Panc1 (cell line): ENCODE measurements at regions of chr1 and their contacts with region 1.

Region 1: DNA sequence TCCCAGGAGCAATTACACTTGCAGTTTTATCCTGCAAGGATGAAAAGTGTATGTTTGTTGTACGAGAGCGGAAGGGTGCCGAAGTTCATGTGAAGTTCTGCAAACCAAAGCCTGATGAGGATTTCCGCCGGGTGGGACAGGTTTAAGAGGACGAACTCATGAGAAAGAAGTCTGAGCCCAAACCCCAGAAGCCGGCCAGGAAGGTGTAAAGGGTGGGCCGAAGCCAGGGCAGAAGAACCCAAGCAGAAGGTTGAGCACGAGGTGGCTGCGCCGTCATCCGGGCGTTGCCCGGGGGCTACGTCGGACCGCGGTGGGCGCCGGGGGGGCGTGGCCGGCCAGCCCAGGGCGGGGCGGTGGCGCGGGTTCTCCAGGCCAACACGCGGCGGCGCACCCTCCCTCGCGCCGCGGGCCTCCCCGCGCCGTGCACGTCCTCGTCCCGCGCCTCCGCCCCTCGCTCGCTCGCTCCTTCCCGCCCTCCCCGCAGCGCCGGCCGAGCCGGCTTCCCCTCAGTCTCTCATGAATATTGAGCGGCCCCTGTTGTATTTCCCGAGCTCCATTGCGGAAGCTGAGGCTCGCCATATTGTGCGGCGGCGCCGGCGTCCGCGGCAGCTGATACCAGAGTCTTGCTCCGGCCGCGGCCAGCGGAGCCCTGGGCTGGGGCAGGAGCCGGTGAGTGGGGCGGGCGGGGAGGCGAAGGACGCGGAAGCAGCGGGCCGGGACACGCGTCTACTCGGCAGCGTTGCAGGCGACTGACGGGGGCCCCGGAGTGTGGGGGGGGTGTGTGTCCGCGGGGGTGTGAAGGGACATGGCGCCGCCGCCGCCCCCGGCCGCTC is at the start of gene RNF2:
- DNase-seq: peak; percentile 17
- ATAC-seq: peak; percentile 99
- H3K4me3 ChIP-seq: peak within 1 kb of the TSS; percentile 87 to 91
- H3K27ac ChIP-seq: peak within 1 kb of the TSS; percentile 81
- H3K4me1 ChIP-seq: peaks cover 18% of the 10 kb centered on the region; the same call in 1 of the 2 replicates
- H3K27me3 ChIP-seq: no peaks in the 10 kb centered on the region
- CTCF ChIP-seq: peak; percentile 39
- total RNA-seq, gene RNF2: 32.8 TPM

Region 2: DNA sequence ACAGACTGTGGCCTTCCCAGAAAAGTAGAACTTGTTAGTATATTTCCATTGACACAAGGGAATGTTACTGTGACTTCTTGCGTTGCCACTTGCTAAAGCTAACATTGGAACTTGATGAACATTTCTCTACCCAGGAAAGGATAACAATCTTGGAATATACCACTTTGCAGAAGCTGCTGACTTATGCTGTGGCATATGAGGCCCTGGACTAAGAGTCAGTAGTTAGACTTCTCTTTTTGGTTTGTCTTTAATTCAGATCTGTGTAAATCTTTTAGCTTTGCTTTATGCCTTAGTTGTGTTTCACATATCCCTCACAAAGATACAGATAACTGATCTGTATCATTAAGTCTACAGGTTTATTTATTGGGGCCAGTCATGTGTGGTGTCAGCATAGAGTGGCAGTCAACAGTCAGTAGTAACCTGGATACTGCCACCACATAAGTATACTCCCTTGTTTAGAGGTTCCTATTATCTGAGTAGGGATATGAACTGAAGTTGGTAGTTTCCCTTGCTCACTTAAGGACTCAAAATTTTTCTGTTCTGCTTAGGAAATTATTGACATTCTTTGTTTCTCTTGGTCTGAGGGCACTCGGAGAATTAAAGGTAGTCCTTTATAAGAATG is 14.9 kb after region 1 on chr1:
- CTCF ChIA-PET with region 1: no interaction called
- POLR2A ChIA-PET with region 1: interaction called, 20 read pairs
- in situ Hi-C with region 1: no loop called
- intact Hi-C with region 1: no loop called
- DNase-seq: no peak
- ATAC-seq: no peak
- H3K4me3 ChIP-seq: no peak overlapping the region
- H3K27ac ChIP-seq: no peak overlapping the region
- H3K4me1 ChIP-seq: 0 out of 2 replicates have a peak, but pooled peaks cover 5% of the 10 kb centered on the region
- H3K27me3 ChIP-seq: no peaks in the 10 kb centered on the region
- CTCF ChIP-seq: no peak

Region 3: GRCh38 chr1:185156854-185157598 is 111.8 kb after region 1 on chr1 and contains the starts of genes SWT1 and TRMT1L:
- CTCF ChIA-PET with region 1: no interaction called
- POLR2A ChIA-PET with region 1: no interaction called
- in situ Hi-C with region 1: no loop called
- intact Hi-C with region 1: no loop called
- DNase-seq: peak; percentile 92
- ATAC-seq: peak; percentile 98
- H3K4me3 ChIP-seq: peak within 1 kb of the TSS; percentile 79 to 99
- H3K27ac ChIP-seq: peak within 1 kb of the TSS; percentile 95
- H3K4me1 ChIP-seq: peaks cover 12% of the 10 kb centered on the region
- H3K27me3 ChIP-seq: no peaks in the 10 kb centered on the region
- CTCF ChIP-seq: no peak
- total RNA-seq, gene SWT1: 2.1 TPM
- total RNA-seq, gene TRMT1L: 19.5 TPM

Region 4: GRCh38 chr1:185317034-185317885 is 272.1 kb after region 1 on chr1 and contains the start of gene IVNS1ABP:
- CTCF ChIA-PET with region 1: no interaction called
- POLR2A ChIA-PET with region 1: no interaction called
- in situ Hi-C with region 1: no loop called
- intact Hi-C with region 1: no loop called
- DNase-seq: peak; percentile 47
- ATAC-seq: peak; percentile 90
- H3K4me3 ChIP-seq: peak within 1 kb of the TSS; percentile 86 to 97
- H3K27ac ChIP-seq: peak within 1 kb of the TSS; percentile 97
- H3K4me1 ChIP-seq: peaks cover 17% of the 10 kb centered on the region; the same call in 1 of the 2 replicates
- H3K27me3 ChIP-seq: no peaks in the 10 kb centered on the region
- CTCF ChIP-seq: peak; percentile 58
- total RNA-seq, gene IVNS1ABP: 70.2 TPM